Uterus (tissue), 4 donors: ENCODE measurements at regions of chr2 and their contacts with region 1.

Region 1: DNA sequence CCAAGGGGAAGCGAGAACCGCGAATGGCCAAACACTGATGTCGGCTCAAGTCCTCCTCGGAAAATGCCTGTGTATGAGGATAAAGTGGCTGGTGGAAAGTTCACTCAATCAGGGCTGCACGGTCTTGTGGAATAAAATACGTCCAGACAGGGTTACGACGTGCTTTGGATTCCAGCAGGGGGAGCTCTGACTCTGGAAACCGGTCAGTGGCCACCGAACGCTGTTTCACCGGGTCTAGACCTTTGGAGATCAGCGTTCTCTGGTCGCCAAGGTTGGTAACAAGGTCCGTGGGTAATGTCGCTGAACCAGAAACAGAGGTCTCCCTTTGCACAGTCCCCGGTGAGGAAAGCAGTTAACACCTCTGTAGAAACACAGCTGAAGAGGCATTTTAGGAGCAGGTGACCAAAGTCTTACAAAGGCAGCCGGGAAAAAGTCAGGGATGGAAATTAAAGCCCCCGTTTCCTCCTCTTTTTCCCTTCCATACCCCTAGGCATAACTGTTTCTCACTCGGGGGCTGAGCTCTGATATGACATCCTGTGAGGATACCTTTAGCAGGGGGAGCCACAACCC is 47.8 kb downstream of the CDCA7 start:
- DNase-seq: peak; percentile 84 to 85
- H3K4me3 ChIP-seq: peak overlapping the region in 1 of 2 donors; percentile 1
- H3K27ac ChIP-seq: peak overlapping the region; percentile 25 to 56
- H3K4me1 ChIP-seq: peaks cover 0 to 5% of the 10 kb centered on the region in 2 donors
- H3K27me3 ChIP-seq: peaks cover 0 to 4% of the 10 kb centered on the region in 2 donors
- CTCF ChIP-seq: peak; percentile 80 to 91 (median 83)
- POLR2A ChIP-seq: no peak

Region 2: DNA sequence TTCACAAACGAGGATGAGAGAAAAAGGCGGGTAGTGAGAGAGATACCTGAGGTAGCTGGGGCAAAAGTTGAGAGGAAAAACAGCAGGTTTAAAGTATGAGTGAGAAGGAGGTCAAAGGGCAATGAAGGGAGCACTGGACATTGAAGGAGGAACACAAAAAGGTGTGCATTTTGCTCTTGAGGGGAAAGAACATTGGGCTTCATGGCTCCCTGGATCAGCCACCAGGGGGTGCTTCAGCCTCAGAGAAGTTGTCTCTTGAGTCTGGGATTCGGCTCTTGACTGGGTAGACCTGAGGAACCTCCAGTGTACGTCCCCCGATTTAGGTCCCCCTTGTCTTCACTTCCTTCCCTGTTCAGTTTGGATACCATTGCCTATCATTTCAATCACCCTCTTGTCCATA is 538.3 kb before region 1 on chr2:
- intact Hi-C with region 1: no loop called
- DNase-seq: peak; percentile 28 to 38
- H3K4me3 ChIP-seq: no peak overlapping the region
- H3K27ac ChIP-seq: no peak overlapping the region
- H3K4me1 ChIP-seq: no peaks in the 10 kb centered on the region
- H3K27me3 ChIP-seq: no peaks in the 10 kb centered on the region
- CTCF ChIP-seq: peak; percentile 10 to 41 (median 26)
- POLR2A ChIP-seq: no peak

Region 3: DNA sequence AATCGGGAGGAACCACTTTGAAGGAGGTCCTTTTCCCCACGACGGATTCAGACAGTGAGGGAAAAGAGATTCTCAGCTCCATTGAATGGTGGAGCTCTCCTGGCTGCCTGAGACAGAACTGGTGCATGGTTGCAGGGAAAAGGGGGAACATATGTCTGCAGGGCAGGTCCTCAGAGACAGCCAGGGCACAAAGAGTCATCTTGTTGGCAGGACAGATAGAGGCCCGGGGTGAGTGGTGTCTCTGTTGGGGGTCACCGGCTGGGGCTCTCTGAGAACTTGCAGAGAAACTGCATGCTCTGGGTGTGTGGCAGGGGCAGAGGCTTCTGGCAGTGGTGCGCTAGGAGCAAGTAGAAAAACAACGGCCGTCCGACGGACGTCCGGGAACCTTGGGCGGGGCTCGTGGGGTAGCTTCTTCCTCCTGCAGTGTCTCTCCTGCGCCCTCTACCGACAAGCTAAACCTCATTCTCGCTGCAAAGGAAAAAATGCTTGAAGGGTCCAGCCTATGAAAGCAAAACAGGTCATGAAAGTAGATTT is 46.5 kb after region 1 on chr2:
- intact Hi-C with region 1: loop called (anchors 5 kb)
- DNase-seq: peak; percentile 66 to 83
- H3K4me3 ChIP-seq: no peak overlapping the region
- H3K27ac ChIP-seq: peak overlapping the region; percentile 18 to 39
- H3K4me1 ChIP-seq: no peaks in the 10 kb centered on the region
- H3K27me3 ChIP-seq: no peaks in the 10 kb centered on the region
- CTCF ChIP-seq: peak; percentile 54 to 79 (median 68)
- POLR2A ChIP-seq: no peak

Region 4: GRCh38 chr2:174341286-174341994 is 939.0 kb after region 1 on chr2:
- intact Hi-C with region 1: loop called (anchors 5 kb)
- DNase-seq: peak; percentile 80 to 88
- H3K4me3 ChIP-seq: no peak overlapping the region
- H3K27ac ChIP-seq: no peak overlapping the region
- H3K4me1 ChIP-seq: peaks cover 0 to 13% of the 10 kb centered on the region in 2 donors
- H3K27me3 ChIP-seq: peaks cover 67 to 77% of the 10 kb centered on the region in 2 donors
- CTCF ChIP-seq: peak; percentile 86 to 98 (median 95)
- POLR2A ChIP-seq: no peak